Naive thymus-derived CD4-positive, alpha-beta T cell (primary cell): ENCODE measurements at regions of chr14 and their contacts with region 1.

Region 1: GRCh38 chr14:90383075-90383730 is 13.6 kb upstream of the CALM1 start:
- DNase-seq: peak; percentile 93 to 98 (median 96)
- ATAC-seq: peak; percentile 91
- H3K4me3 ChIP-seq: peak overlapping the region; percentile 95
- H3K4me3 Mint-ChIP-seq: no peak overlapping the region
- H3K27ac ChIP-seq: peak overlapping the region; percentile 99
- H3K27ac Mint-ChIP-seq: no peak overlapping the region
- H3K4me1 ChIP-seq: peaks cover 18 to 23% of the 10 kb centered on the region in 2 donors
- H3K4me1 Mint-ChIP-seq: peaks cover 20 to 37% (median 26%) of the 10 kb centered on the region in 7 donors
- H3K27me3 ChIP-seq: no peaks in the 10 kb centered on the region
- H3K27me3 Mint-ChIP-seq: peaks cover 0 to 5% (median 0%) of the 10 kb centered on the region in 5 donors

Region 2: GRCh38 chr14:88792572-88793258 is 1590.5 kb before region 1 on chr14 and contains the start of gene EML5:
- CTCF ChIA-PET with region 1: no interaction called
- POLR2A ChIA-PET with region 1: no interaction called
- intact Hi-C with region 1: loop called in 1 of 2 experiments (anchors 5 kb)
- DNase-seq: peak; percentile 78 to 89 (median 86)
- ATAC-seq: peak; percentile 93
- H3K4me3 ChIP-seq: peak within 1 kb of the TSS; percentile 87
- H3K4me3 Mint-ChIP-seq: peak within 1 kb of the TSS; percentile 83 to 93 (median 91)
- H3K27ac ChIP-seq: peak within 1 kb of the TSS; percentile 78
- H3K27ac Mint-ChIP-seq: peak within 1 kb of the TSS; percentile 42 to 94 (median 77)
- H3K4me1 ChIP-seq: peaks cover 7 to 10% of the 10 kb centered on the region in 2 donors
- H3K4me1 Mint-ChIP-seq: peaks cover 8 to 29% (median 19%) of the 10 kb centered on the region in 7 donors
- H3K27me3 ChIP-seq: no peaks in the 10 kb centered on the region
- H3K27me3 Mint-ChIP-seq: peaks cover 0 to 36% (median 0%) of the 10 kb centered on the region in 5 donors
- total RNA-seq, gene EML5: 1.3 to 6.4 (median 5.4) TPM

Region 3: GRCh38 chr14:90177539-90178189 is 205.5 kb before region 1 on chr14:
- CTCF ChIA-PET with region 1: no interaction called
- POLR2A ChIA-PET with region 1: no interaction called
- intact Hi-C with region 1: no loop called
- DNase-seq: no peak
- ATAC-seq: no peak
- H3K4me3 ChIP-seq: no peak overlapping the region
- H3K4me3 Mint-ChIP-seq: no peak overlapping the region
- H3K27ac ChIP-seq: no peak overlapping the region
- H3K27ac Mint-ChIP-seq: no peak overlapping the region
- H3K4me1 ChIP-seq: no peaks in the 10 kb centered on the region
- H3K4me1 Mint-ChIP-seq: no peaks in the 10 kb centered on the region
- H3K27me3 ChIP-seq: no peaks in the 10 kb centered on the region
- H3K27me3 Mint-ChIP-seq: peaks cover 5 to 15% (median 7%) of the 10 kb centered on the region in 5 donors

Region 4: DNA sequence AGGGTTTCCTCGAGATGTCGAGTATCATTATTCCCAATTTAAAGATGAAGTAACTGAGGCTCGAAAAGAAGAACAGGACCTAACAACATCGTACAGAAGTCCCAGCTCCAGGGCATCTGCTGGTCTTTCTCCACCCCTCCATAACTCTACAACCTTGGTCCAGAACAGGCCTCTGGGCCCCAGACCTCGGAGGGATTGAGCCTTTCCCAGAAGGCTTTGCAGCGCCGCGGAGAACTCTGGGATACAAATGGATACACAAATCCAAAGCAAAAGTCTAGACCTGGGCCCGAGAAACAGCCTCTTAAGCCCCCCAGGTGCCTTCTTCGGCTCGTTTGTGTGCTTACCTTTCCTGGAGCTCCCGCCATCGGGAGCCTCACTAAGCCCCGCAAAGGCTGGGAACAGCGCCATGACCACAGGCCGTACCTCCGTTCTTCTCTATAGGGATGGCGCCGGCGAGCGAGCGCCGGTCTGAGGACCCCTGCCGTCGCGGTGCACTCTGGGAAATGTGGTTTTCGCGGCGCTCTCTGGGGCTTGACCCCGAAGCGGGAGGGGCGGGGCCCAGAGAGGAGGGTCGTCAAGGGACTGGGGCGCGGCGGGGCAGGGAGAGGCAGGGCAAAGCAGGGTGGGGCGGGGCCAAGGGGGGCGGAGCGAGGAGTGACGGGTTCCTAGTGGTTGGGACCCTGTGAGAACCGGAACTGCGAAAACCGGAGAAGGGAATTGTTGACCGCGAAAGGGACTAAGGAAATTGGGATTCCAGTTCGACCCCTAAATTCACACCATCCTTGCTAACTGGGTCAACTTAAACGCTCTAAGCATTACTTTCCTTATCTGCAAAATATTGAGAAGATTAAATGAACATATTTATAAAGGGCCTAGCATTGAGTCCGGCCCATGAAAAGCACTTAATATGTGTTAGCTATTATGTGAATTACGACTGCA is 51.4 kb before region 1 on chr14 and contains the start of gene NRDE2:
- CTCF ChIA-PET with region 1: interaction called, 8 read pairs
- POLR2A ChIA-PET with region 1: interaction called, 41 read pairs
- intact Hi-C with region 1: loop called (anchors 1 kb)
- DNase-seq: peak; percentile 74 to 95 (median 85)
- ATAC-seq: peak; percentile 99
- H3K4me3 ChIP-seq: peak within 1 kb of the TSS; percentile 91
- H3K4me3 Mint-ChIP-seq: peak within 1 kb of the TSS; percentile 90 to 95 (median 93)
- H3K27ac ChIP-seq: peak within 1 kb of the TSS; percentile 72
- H3K27ac Mint-ChIP-seq: peak within 1 kb of the TSS; percentile 86 to 97 (median 92)
- H3K4me1 ChIP-seq: peaks cover 0 to 9% of the 10 kb centered on the region in 2 donors
- H3K4me1 Mint-ChIP-seq: peaks cover 14 to 44% (median 38%) of the 10 kb centered on the region in 7 donors
- H3K27me3 ChIP-seq: no peaks in the 10 kb centered on the region
- H3K27me3 Mint-ChIP-seq: peaks cover 7 to 25% (median 9%) of the 10 kb centered on the region in 5 donors
- total RNA-seq, gene NRDE2: 23.6 to 30.2 (median 28.7) TPM

Region 5: GRCh38 chr14:90518941-90519256 is 135.7 kb after region 1 on chr14:
- CTCF ChIA-PET with region 1: interaction called, 4 read pairs
- POLR2A ChIA-PET with region 1: no interaction called
- intact Hi-C with region 1: loop called in 1 of 2 experiments (anchors 5 kb)
- DNase-seq: peak in 8 of 9 donors; percentile 21 to 59 (median 50)
- ATAC-seq: peak; percentile 65
- H3K4me3 ChIP-seq: no peak overlapping the region
- H3K4me3 Mint-ChIP-seq: no peak overlapping the region
- H3K27ac ChIP-seq: no peak overlapping the region
- H3K27ac Mint-ChIP-seq: no peak overlapping the region
- H3K4me1 ChIP-seq: no peaks in the 10 kb centered on the region
- H3K4me1 Mint-ChIP-seq: no peaks in the 10 kb centered on the region
- H3K27me3 ChIP-seq: no peaks in the 10 kb centered on the region
- H3K27me3 Mint-ChIP-seq: peaks cover 0 to 7% (median 0%) of the 10 kb centered on the region in 5 donors

Region 6: GRCh38 chr14:91060351-91061055 is 677.3 kb after region 1 on chr14 and contains the start of gene RPS6KA5:
- CTCF ChIA-PET with region 1: no interaction called
- POLR2A ChIA-PET with region 1: no interaction called
- intact Hi-C with region 1: loop called in 1 of 2 experiments (anchors 1 kb)
- DNase-seq: peak; percentile 93 to 100 (median 100)
- ATAC-seq: peak; percentile 89
- H3K4me3 ChIP-seq: peak within 1 kb of the TSS; percentile 59
- H3K4me3 Mint-ChIP-seq: peak within 1 kb of the TSS in 9 of 10 donors; percentile 80 to 90 (median 86)
- H3K27ac ChIP-seq: peak within 1 kb of the TSS; percentile 91
- H3K27ac Mint-ChIP-seq: peak within 1 kb of the TSS; percentile 28 to 83 (median 74)
- H3K4me1 ChIP-seq: peaks cover 36 to 38% of the 10 kb centered on the region in 2 donors
- H3K4me1 Mint-ChIP-seq: peaks cover 39 to 71% (median 64%) of the 10 kb centered on the region in 7 donors
- H3K27me3 ChIP-seq: no peaks in the 10 kb centered on the region
- H3K27me3 Mint-ChIP-seq: no peaks in the 10 kb centered on the region
- total RNA-seq, gene RPS6KA5: 31.9 to 43.5 (median 34.3) TPM

Region 7: GRCh38 chr14:91510174-91511042 is 1127.2 kb after region 1 on chr14 and contains the start of gene PPP4R3A:
- CTCF ChIA-PET with region 1: no interaction called
- POLR2A ChIA-PET with region 1: no interaction called
- intact Hi-C with region 1: loop called in 1 of 2 experiments (anchors 2 kb)
- DNase-seq: peak; percentile 86 to 96 (median 95)
- ATAC-seq: peak; percentile 92
- H3K4me3 ChIP-seq: peak within 1 kb of the TSS; percentile 62
- H3K4me3 Mint-ChIP-seq: peak within 1 kb of the TSS; percentile 93 to 100 (median 98)
- H3K27ac ChIP-seq: peak within 1 kb of the TSS; percentile 99
- H3K27ac Mint-ChIP-seq: peak within 1 kb of the TSS; percentile 100
- H3K4me1 ChIP-seq: peaks cover 14 to 22% of the 10 kb centered on the region in 2 donors
- H3K4me1 Mint-ChIP-seq: peaks cover 15 to 38% (median 32%) of the 10 kb centered on the region in 7 donors
- H3K27me3 ChIP-seq: no peaks in the 10 kb centered on the region
- H3K27me3 Mint-ChIP-seq: no peaks in the 10 kb centered on the region
- total RNA-seq, gene PPP4R3A: 129 to 214 (median 167) TPM

Region 8: DNA sequence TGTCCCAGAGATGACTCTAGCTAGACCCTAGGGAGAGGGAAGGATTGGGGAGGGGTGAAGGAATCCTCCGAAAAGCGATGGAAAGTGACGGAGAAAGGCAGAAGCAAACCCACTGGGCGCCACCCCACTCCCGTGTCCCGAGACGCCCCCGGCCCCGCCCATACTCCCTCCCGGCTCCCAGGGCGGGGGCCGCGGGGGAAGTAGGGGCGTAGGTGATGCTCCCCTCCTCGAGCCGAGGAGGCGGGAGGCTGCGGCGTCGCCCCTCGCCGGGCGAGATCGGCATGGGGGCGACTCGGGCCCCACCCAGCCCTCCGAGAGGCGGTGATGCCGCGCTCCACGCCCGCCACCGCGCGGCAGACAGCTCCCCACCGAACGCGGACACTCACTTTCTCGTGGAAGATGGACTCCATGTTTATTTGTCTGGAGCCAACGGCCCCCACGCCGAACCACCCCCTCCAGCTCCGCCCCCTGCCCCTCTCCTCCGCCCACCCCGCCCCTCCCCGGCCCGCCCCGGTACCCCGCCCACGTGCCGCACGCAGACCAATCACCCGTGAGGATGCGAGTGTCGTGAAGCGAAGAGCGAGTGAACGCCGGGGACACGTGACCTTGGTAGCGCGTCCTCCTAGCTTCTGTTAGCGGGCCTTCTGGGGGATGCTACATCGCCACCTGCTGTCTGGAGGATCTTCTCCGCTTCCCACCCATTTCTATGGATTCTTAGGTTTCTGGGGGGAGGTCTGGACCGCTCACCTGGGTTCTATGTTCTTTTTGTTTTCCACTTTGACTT is 1723.1 kb after region 1 on chr14 and contains the start of gene ATXN3:
- CTCF ChIA-PET with region 1: interaction called, 3 read pairs
- POLR2A ChIA-PET with region 1: interaction called, 3 read pairs
- intact Hi-C with region 1: loop called in 1 of 2 experiments (anchors 1 kb)
- DNase-seq: peak; percentile 75 to 97 (median 93)
- ATAC-seq: peak; percentile 95
- H3K4me3 ChIP-seq: peak within 1 kb of the TSS; percentile 82
- H3K4me3 Mint-ChIP-seq: peak within 1 kb of the TSS; percentile 88 to 100 (median 98)
- H3K27ac ChIP-seq: peak within 1 kb of the TSS; percentile 91
- H3K27ac Mint-ChIP-seq: peak within 1 kb of the TSS; percentile 82 to 96 (median 92)
- H3K4me1 ChIP-seq: peaks cover 5 to 17% of the 10 kb centered on the region in 2 donors
- H3K4me1 Mint-ChIP-seq: peaks cover 39 to 72% (median 61%) of the 10 kb centered on the region in 7 donors
- H3K27me3 ChIP-seq: no peaks in the 10 kb centered on the region
- H3K27me3 Mint-ChIP-seq: no peaks in the 10 kb centered on the region
- total RNA-seq, gene ATXN3: 27.8 to 54.9 (median 36.9) TPM